ENCODE measurements at regions of chr10 and their contacts with region 1.

Region 1: DNA sequence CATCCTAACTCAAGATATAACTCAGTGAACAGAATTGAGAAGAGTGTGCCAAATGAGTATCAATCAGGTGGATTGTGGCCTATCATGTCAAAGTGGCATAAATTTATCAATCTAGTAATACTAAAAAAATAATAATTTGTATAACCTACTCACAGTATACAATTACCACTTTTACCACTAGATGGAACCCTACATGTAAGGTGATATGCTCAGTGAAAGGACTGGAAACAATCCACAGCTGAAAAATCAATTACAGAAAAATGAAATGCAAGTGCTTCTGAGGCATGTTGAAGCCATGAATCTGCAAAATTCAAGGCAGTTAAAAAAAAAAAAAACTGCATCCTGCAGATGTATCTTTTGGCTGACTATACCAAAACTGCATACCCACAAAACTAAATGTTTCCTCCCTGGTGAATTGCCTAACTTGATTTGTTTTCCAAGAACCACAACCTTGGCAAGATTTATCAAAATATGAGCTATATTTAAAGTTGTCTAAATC is 13.9 kb downstream of the ARHGAP19 start:
- DNase-seq: peak in 1 of 2 experiments; percentile 57
- H3K4me3 ChIP-seq: no peak overlapping the region
- H3K27ac ChIP-seq: peak overlapping the region; percentile 45
- H3K4me1 ChIP-seq: peaks cover 19% of the 10 kb centered on the region
- H3K27me3 ChIP-seq: no peaks in the 10 kb centered on the region
- CTCF ChIP-seq: peak; percentile 63

Region 2: GRCh38 chr10:97355571-97355975 is 77.0 kb after region 1 on chr10:
- CTCF ChIA-PET with region 1: no interaction called
- POLR2A ChIA-PET with region 1: no interaction called
- intact Hi-C with region 1: loop called (anchors 2 kb)
- DNase-seq: no peak
- H3K4me3 ChIP-seq: no peak overlapping the region
- H3K27ac ChIP-seq: no peak overlapping the region
- H3K4me1 ChIP-seq: no peaks in the 10 kb centered on the region
- H3K27me3 ChIP-seq: no peaks in the 10 kb centered on the region
- CTCF ChIP-seq: peak; percentile 39; the same call in 1 of the 2 replicates

Region 3: DNA sequence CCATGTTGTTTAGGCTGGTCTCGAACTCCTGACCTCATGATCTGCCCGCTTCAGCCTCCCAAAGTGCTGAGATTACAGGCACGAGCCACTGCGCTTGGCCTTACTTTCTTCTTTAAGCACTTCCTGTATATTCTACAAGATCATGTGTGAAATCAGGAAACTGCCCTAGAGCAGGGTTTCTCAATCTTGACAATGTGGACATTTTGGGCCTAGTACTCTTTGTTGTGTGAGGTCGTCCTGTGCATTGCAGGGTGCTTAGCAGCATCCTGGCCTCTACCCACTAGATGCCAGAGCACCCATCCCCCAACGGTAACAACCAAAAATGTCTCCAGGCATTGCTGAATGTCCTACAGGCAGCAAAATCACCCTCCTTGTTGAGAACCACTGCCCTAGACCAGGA is 97.9 kb after region 1 on chr10:
- CTCF ChIA-PET with region 1: interaction called, 10 read pairs
- POLR2A ChIA-PET with region 1: no interaction called
- intact Hi-C with region 1: no loop called
- DNase-seq: no peak
- H3K4me3 ChIP-seq: no peak overlapping the region
- H3K27ac ChIP-seq: no peak overlapping the region
- H3K4me1 ChIP-seq: no peaks in the 10 kb centered on the region
- H3K27me3 ChIP-seq: no peaks in the 10 kb centered on the region
- CTCF ChIP-seq: no peak

Measured in PC-9 (cell line).